Dendritic cell treated with granulocyte-macrophage colony-stimulating factor and Interleukin-4, amounts not matched to agents 40 ng/mL and 50 ng/mL, for 4 days (primary cell): ENCODE measurements at regions of chr17 and their contacts with region 1.

Region 1: GRCh38 chr17:59680314-59680713 is 26.9 kb downstream of the PTRH2 start:
- H3K4me3 Mint-ChIP-seq: no peak overlapping the region
- H3K27ac Mint-ChIP-seq: no peak overlapping the region
- H3K4me1 Mint-ChIP-seq: peaks cover 2% of the 10 kb centered on the region
- H3K27me3 Mint-ChIP-seq: no peaks in the 10 kb centered on the region

Region 2: DNA sequence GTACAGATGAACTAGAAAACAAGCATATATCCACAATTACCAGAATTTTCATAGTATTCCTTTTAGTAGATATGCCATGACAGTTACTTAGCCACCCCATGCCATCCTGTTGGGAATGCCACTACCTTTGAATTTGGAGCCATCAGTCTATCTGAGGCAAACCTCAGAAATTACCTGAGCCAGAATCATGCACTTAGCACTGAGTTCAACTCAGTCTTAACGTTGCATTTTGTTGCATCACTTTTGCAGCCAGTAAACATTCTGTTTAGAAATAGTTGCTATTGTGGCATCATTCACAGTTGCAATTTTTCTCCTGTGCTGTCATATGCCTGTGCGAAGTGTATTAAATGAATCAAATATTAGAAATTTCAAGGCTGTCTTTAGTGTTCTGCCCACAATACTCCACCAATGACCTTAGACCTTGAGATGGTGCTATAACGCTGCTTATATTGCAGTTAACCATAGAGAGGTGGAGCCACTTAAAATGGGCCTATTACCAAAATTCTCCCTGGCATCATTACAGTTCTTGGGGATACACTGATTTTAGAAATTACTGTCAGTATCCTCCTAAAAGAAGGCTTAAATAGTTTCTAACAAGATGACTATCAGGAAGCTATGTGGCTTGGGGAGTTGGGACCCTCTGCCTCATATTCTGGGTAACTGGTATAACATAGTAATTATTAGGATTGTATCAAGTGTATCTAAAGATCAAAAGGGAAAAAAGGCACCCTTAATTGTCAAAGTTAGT is 15.8 kb after region 1 on chr17:
- intact Hi-C with region 1: loop called (anchors 2 kb)
- H3K4me3 Mint-ChIP-seq: no peak overlapping the region
- H3K27ac Mint-ChIP-seq: no peak overlapping the region
- H3K4me1 Mint-ChIP-seq: peaks cover 17% of the 10 kb centered on the region
- H3K27me3 Mint-ChIP-seq: no peaks in the 10 kb centered on the region

Region 3: DNA sequence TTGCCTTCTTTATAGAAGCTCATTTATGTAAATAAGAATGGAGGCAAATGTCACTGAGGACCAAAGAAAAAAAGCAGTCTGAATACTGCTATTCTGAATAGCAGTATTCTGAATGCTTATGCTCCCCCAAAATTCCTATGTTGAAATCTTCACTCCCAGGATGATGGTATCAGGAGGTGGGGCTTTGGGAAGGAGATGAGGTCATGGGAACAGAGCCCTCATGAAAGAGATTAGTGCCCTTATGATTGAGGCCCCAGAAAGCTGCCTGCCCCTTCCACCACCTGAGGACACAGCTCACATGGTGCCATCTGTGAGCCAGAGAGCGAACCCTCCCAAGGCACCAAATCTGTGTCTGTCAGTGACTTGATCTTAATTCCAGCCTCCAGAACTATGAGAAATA is 369.6 kb after region 1 on chr17:
- intact Hi-C with region 1: loop called (anchors 10 kb)
- H3K4me3 Mint-ChIP-seq: no peak overlapping the region
- H3K27ac Mint-ChIP-seq: no peak overlapping the region
- H3K4me1 Mint-ChIP-seq: no peaks in the 10 kb centered on the region
- H3K27me3 Mint-ChIP-seq: no peaks in the 10 kb centered on the region